ENCODE measurements at regions of chr1 and their contacts with region 1.

Region 1: DNA sequence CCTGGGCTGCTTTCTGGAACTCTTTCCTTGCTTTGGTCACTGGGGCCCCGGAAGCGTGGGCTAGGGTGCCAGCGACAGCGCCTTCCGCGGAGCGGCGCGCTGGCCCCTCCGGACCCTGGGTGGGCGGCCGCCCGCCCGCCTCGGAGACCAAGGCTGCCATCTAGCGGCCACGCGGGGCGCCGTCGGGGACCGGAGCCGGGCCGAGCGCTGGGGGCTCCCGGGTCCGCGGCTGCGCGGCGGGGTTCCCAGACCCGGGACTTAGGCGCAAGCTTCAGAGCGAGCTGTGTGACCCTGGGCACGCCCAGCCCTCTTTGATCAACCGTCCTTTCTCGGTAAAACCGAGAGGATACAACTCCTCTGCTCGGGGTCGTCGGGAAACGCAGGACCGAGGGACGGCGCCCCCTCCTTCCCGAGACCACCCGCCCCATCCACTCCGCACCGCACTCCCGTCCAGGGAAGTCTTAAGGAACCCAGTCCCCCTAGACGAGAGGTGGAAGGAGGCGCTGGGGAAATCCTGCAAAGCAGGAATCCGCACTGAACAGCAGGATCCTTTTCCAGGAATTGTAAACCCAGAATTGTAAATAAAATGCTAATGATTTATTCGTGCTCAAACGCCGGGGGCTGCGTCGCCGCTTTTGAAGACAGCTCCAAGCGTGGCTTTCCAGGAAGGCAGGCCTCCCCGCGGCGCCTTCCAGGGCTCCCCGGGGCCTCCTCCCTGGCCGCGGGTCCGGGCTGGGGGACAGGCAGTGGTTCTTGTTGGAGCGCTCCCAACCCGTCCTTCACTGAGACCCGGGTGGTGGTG is 41.2 kb downstream of the RRAGC start:
- H3K4me3 ChIP-seq: peak overlapping the region; percentile 35
- H3K27ac ChIP-seq: no peak overlapping the region; the same call in 1 of the 2 replicates
- H3K4me1 ChIP-seq: no peaks in the 10 kb centered on the region
- CTCF ChIP-seq: peak; percentile 71; the same call in 1 of the 2 replicates

Region 2: GRCh38 chr1:38608202-38608864 is 210.0 kb before region 1 on chr1:
- CTCF ChIA-PET with region 1: interaction called, 23 read pairs
- POLR2A ChIA-PET with region 1: no interaction called
- H3K4me3 ChIP-seq: no peak overlapping the region
- H3K27ac ChIP-seq: no peak overlapping the region
- H3K4me1 ChIP-seq: no peaks in the 10 kb centered on the region
- CTCF ChIP-seq: peak; percentile 70; the same call in 1 of the 2 replicates